Activated B cell treated with CpG ODN at 0.5 μM for 24 hours (primary cell): ENCODE measurements at regions of chr2 and their contacts with region 1.

Region 1: DNA sequence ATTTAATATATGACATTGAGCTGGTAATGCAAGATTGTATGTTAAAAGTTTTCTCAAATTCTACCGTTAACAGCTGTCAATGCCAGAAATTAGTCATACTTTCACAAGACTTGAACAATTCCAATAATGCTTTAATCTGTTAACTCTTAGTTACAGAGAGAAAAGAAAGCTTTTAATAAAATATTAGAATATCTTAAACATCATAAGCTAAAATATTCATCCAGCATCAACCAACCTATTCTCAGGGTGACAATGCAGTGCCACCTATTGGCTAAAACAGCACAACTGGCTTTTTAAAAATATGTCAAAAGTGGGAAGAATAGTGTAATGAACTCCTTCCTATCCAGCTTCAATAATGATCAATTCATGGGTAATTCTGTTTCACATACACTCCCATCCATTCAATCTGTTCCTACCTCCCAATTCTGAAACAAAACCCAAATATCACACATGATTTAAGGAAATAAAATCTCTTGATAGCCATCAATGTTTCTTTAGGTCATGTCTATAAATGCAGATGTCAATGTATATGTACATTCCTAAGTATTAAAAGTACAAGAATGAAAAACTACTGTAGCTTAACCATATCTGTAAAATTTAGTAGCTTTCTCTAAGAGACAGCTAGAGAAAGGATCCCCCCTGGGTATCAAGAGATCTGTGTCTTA is 79.8 kb upstream of the CCDC141 start:
- DNase-seq: no peak
- ATAC-seq: no peak
- H3K4me3 Mint-ChIP-seq: no peak overlapping the region
- H3K27ac Mint-ChIP-seq: no peak overlapping the region
- H3K4me1 Mint-ChIP-seq: peaks cover 2% of the 10 kb centered on the region
- H3K27me3 Mint-ChIP-seq: no peaks in the 10 kb centered on the region
- CTCF ChIP-seq: no peak

Region 2: GRCh38 chr2:178761759-178762371 is 367.8 kb before region 1 on chr2:
- CTCF ChIA-PET with region 1: interaction called, 7 read pairs
- POLR2A ChIA-PET with region 1: no interaction called
- intact Hi-C with region 1: loop called (anchors 2 kb)
- DNase-seq: no peak
- ATAC-seq: peak; percentile 54
- H3K4me3 Mint-ChIP-seq: no peak overlapping the region
- H3K27ac Mint-ChIP-seq: no peak overlapping the region
- H3K4me1 Mint-ChIP-seq: peaks cover 1% of the 10 kb centered on the region
- H3K27me3 Mint-ChIP-seq: no peaks in the 10 kb centered on the region
- CTCF ChIP-seq: no peak

Region 3: GRCh38 chr2:178796079-178796677 is 333.5 kb before region 1 on chr2:
- CTCF ChIA-PET with region 1: interaction called, 7 read pairs
- POLR2A ChIA-PET with region 1: no interaction called
- intact Hi-C with region 1: loop called (anchors 1 kb)
- DNase-seq: no peak
- ATAC-seq: no peak
- H3K4me3 Mint-ChIP-seq: no peak overlapping the region
- H3K27ac Mint-ChIP-seq: no peak overlapping the region
- H3K4me1 Mint-ChIP-seq: no peaks in the 10 kb centered on the region
- H3K27me3 Mint-ChIP-seq: no peaks in the 10 kb centered on the region
- CTCF ChIP-seq: no peak

Region 4: DNA sequence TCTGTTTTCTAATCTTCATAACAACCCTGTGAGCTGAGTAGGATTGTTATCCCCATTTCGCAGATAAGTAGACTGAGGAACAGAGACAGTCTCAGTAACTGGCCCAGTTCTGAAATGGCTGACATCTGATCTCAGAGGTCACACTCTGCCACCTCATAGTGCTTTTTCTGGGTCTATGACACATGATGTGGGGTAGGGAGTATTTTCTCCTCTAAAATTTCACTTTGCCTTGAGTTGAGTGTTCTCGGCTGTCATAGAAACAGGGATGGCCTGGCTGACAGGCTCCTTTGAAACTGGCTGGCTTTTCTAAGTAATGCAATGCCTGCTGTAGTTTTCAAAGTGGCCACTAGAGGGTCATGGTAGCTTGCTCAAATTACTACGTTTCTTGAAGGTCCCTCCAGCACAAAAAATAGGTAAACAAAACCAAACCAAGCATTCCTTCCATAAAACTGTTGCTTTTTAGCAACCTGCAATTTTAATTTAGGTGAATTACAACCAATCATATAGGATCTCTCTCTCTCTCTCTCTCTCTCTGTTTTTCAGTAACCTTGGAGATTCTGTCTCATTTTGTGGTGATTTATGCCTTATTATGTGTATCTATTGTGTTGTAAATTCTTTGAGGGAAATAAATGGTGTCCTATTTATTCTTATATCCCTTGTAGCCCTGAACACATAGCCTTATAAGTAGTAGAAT is 238.3 kb before region 1 on chr2:
- CTCF ChIA-PET with region 1: interaction called, 87 read pairs
- POLR2A ChIA-PET with region 1: no interaction called
- intact Hi-C with region 1: loop called (anchors 1 kb)
- DNase-seq: no peak
- ATAC-seq: peak; percentile 76
- H3K4me3 Mint-ChIP-seq: no peak overlapping the region
- H3K27ac Mint-ChIP-seq: no peak overlapping the region
- H3K4me1 Mint-ChIP-seq: no peaks in the 10 kb centered on the region
- H3K27me3 Mint-ChIP-seq: no peaks in the 10 kb centered on the region
- CTCF ChIP-seq: peak; percentile 64

Region 5: DNA sequence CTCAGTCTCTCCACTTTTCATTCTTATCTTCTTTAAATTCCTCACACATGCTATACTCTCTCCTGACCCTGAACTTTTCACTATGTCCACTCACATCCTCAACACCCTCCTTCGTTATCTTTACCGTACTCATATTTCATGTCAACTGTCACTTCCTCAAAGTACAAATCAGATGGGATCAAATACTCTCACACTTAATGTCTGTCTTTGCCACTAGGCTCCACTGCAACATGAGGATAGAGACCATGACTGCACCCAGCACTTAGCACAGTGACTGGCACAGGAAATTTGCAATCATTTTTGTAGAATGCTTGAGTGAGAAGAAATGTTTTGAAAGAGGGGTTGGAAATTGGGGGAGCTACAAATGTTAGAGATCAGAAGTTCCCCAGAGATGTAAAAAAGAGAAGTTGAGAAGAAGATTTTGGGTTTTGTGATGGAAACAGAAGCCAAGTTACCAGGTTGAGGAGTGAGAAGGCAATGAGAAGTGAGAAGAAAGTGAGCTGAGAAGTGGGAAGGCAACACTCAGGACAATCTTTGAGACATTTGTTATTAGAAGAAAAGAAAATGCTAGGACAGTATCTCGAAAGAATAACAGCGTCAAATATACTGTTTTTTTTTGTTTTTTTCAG is 166.8 kb before region 1 on chr2:
- CTCF ChIA-PET with region 1: interaction called, 17 read pairs
- POLR2A ChIA-PET with region 1: no interaction called
- intact Hi-C with region 1: loop called (anchors 1 kb)
- DNase-seq: no peak
- ATAC-seq: peak; percentile 84
- H3K4me3 Mint-ChIP-seq: no peak overlapping the region
- H3K27ac Mint-ChIP-seq: no peak overlapping the region
- H3K4me1 Mint-ChIP-seq: peaks cover 7% of the 10 kb centered on the region
- H3K27me3 Mint-ChIP-seq: no peaks in the 10 kb centered on the region
- CTCF ChIP-seq: no peak